Heart right ventricle (tissue), 16 donors: ENCODE measurements at regions of chr4 and their contacts with region 1.

Region 1: DNA sequence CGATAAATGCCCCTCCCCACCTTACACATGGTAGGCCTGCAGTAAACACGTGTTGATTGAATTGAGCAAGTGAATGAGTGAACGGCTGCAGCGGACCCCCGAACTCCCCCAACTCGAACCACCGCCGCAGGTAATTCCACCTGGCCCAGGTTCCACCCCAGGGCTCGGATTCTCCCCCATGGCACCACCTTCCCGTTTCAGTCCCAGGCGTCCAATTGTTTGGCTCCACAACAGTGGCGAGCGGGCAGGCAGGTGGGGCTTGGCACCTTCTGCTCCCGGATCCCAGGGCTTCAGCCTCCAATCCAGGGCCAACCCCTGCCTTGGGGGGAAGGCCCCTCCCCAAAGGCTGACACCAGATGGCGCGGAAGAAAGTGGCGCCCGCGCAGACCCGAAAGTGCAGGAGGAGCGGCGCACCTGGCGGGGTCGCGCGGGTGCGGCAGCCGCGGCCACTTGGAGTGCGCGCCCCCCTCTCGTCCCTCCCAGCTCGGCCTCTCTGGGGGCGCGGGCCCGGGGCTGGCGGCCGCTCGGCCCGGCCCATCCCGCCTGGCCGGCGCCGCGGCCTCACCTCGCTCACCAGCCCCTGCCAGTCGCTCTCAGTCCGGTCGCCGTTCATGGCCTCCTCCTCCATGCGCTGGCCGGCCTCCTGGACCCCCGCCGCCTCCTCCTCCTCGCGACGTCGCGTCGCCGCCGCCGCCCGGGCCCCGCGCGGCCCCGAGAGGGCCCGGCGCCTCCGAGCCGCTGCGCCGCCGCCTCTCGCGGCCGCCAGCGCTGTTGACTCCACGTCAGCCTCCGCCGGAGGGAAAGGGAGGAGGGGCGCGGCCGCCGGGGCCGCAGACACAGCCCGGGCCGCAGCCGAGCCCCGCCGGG is at the start of gene CCDC149:
- DNase-seq: peak; percentile 70 to 76
- ATAC-seq: peak; percentile 84 to 93 (median 90)
- H3K4me3 ChIP-seq: peak within 1 kb of the TSS; percentile 37 to 74 (median 67)
- H3K27ac ChIP-seq: peak within 1 kb of the TSS; percentile 87 to 97 (median 92)
- H3K4me1 ChIP-seq: peaks cover 2 to 21% (median 7%) of the 10 kb centered on the region in 9 donors
- H3K27me3 ChIP-seq: no peaks in the 10 kb centered on the region
- CTCF ChIP-seq: peak in 5 of 9 donors; percentile 7 to 38 (median 19)
- total RNA-seq, gene CCDC149: 8.0 to 17.7 (median 9.3) TPM

Region 2: GRCh38 chr4:24794916-24795665 is 117.4 kb before region 1 on chr4 and contains the start of gene SOD3:
- intact Hi-C with region 1: loop called in 1 of 10 experiments (anchors 2 kb)
- DNase-seq: peak; percentile 80 to 88
- ATAC-seq: peak; percentile 93 to 98 (median 96)
- H3K4me3 ChIP-seq: peak within 1 kb of the TSS in 9 of 10 donors; percentile 22 to 54 (median 48)
- H3K27ac ChIP-seq: peak within 1 kb of the TSS; percentile 39 to 90 (median 85)
- H3K4me1 ChIP-seq: peaks cover 2 to 36% (median 17%) of the 10 kb centered on the region in 9 donors
- H3K27me3 ChIP-seq: peaks cover 0 to 18% (median 9%) of the 10 kb centered on the region in 7 donors
- CTCF ChIP-seq: no peak
- total RNA-seq, gene SOD3: 30.3 to 118 (median 56.2) TPM

Region 3: GRCh38 chr4:25144870-25145481 is 232.5 kb after region 1 on chr4:
- intact Hi-C with region 1: no loop called
- DNase-seq: no peak
- ATAC-seq: peak in 1 of 8 donors; percentile 38
- H3K4me3 ChIP-seq: no peak overlapping the region
- H3K27ac ChIP-seq: no peak overlapping the region
- H3K4me1 ChIP-seq: peaks cover 0 to 11% (median 0%) of the 10 kb centered on the region in 9 donors
- H3K27me3 ChIP-seq: no peaks in the 10 kb centered on the region
- CTCF ChIP-seq: peak; percentile 36 to 76 (median 63)

Region 4: GRCh38 chr4:25358515-25359275 is 446.2 kb after region 1 on chr4:
- intact Hi-C with region 1: no loop called
- DNase-seq: no peak
- ATAC-seq: no peak
- H3K4me3 ChIP-seq: no peak overlapping the region
- H3K27ac ChIP-seq: no peak overlapping the region
- H3K4me1 ChIP-seq: no peaks in the 10 kb centered on the region
- H3K27me3 ChIP-seq: no peaks in the 10 kb centered on the region
- CTCF ChIP-seq: no peak